Naive thymus-derived CD4-positive, alpha-beta T cell (primary cell): ENCODE measurements at regions of chr13 and their contacts with region 1.

Region 1: DNA sequence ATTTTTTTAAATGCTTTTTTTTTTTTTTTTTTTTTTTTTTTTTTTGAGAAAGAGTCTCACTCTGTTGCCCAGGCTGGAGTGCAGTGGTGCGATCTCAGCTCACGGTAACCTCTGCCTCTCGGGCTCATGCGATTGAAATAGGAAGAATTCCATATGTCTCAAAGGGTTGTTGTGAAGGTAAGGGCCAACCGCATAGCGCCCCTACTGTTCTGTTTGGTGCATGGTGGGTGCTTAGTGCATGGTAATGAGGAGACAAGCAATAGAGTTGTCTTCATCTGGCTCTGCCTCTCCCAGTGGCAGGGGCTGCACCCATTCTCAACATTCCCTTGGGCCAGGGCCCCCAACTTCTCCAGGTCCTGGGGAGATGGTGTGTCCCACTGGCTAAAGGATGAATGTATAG is 68.7 kb downstream of the RASL11A start:
- DNase-seq: peak in 7 of 9 donors; percentile 28 to 61 (median 51)
- ATAC-seq: peak; percentile 78
- H3K4me3 ChIP-seq: no peak overlapping the region
- H3K4me3 Mint-ChIP-seq: peak overlapping the region in 2 of 10 donors; percentile 29
- H3K27ac ChIP-seq: no peak overlapping the region
- H3K27ac Mint-ChIP-seq: no peak overlapping the region
- H3K4me1 ChIP-seq: no peaks in the 10 kb centered on the region
- H3K4me1 Mint-ChIP-seq: peaks cover 0 to 5% (median 0%) of the 10 kb centered on the region in 7 donors
- H3K27me3 ChIP-seq: no peaks in the 10 kb centered on the region
- H3K27me3 Mint-ChIP-seq: peaks cover 0 to 17% (median 4%) of the 10 kb centered on the region in 5 donors

Region 2: DNA sequence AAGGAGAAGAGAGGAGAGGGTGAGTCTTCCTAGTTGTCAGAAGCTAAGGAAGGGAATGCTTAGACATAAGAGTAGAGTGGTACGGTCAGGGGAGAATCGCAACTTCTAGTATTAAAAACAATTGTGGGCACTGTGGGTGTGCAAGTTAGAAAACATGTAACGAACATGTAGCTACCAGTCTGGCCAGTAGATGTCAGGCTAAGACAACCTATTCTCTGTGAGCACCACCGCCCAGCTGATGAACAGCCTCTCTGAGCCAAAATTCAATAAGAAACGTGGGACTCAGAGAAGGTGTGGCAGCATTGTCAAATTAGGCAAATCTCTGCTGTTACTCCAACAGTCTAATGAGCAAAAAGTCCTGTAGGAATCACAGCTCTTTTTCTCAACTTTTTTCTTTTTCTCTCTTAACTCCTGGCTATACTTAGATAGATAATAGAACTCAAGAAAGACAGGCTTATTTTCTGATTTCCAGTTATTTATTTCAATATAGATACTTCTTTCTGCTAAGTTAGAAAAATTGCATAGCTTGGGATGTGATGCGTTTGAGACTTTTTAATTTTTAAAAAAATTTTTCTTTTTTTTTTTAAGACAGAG is 353.9 kb before region 1 on chr13:
- CTCF ChIA-PET with region 1: interaction called, 4 read pairs
- POLR2A ChIA-PET with region 1: no interaction called
- intact Hi-C with region 1: loop called in 1 of 2 experiments (anchors 1 kb)
- DNase-seq: peak; percentile 17 to 76 (median 65)
- ATAC-seq: peak; percentile 83
- H3K4me3 ChIP-seq: no peak overlapping the region
- H3K4me3 Mint-ChIP-seq: no peak overlapping the region
- H3K27ac ChIP-seq: no peak overlapping the region
- H3K27ac Mint-ChIP-seq: peak overlapping the region in 1 of 9 donors; percentile 46
- H3K4me1 ChIP-seq: no peaks in the 10 kb centered on the region
- H3K4me1 Mint-ChIP-seq: peaks cover 0 to 10% (median 0%) of the 10 kb centered on the region in 7 donors
- H3K27me3 ChIP-seq: no peaks in the 10 kb centered on the region
- H3K27me3 Mint-ChIP-seq: peaks cover 3 to 17% (median 11%) of the 10 kb centered on the region in 5 donors

Region 3: GRCh38 chr13:27097691-27098090 is 241.6 kb before region 1 on chr13:
- CTCF ChIA-PET with region 1: no interaction called
- POLR2A ChIA-PET with region 1: no interaction called
- intact Hi-C with region 1: loop called in 1 of 2 experiments (anchors 10 kb)
- DNase-seq: no peak
- ATAC-seq: no peak
- H3K4me3 ChIP-seq: no peak overlapping the region
- H3K4me3 Mint-ChIP-seq: no peak overlapping the region
- H3K27ac ChIP-seq: no peak overlapping the region
- H3K27ac Mint-ChIP-seq: no peak overlapping the region
- H3K4me1 ChIP-seq: no peaks in the 10 kb centered on the region
- H3K4me1 Mint-ChIP-seq: peaks cover 9 to 21% (median 17%) of the 10 kb centered on the region in 7 donors
- H3K27me3 ChIP-seq: no peaks in the 10 kb centered on the region
- H3K27me3 Mint-ChIP-seq: no peaks in the 10 kb centered on the region

Region 4: GRCh38 chr13:27293873-27294515 is 45.3 kb before region 1 on chr13:
- CTCF ChIA-PET with region 1: interaction called, 3 read pairs
- POLR2A ChIA-PET with region 1: interaction called, 5 read pairs
- intact Hi-C with region 1: loop called in 1 of 2 experiments (anchors 5 kb)
- DNase-seq: peak in 7 of 9 donors; percentile 35 to 63 (median 57)
- ATAC-seq: peak; percentile 75
- H3K4me3 ChIP-seq: no peak overlapping the region
- H3K4me3 Mint-ChIP-seq: peak overlapping the region; percentile 16 to 84 (median 64)
- H3K27ac ChIP-seq: peak overlapping the region; percentile 61
- H3K27ac Mint-ChIP-seq: peak overlapping the region; percentile 31 to 96 (median 91)
- H3K4me1 ChIP-seq: peaks cover 0 to 33% of the 10 kb centered on the region in 2 donors
- H3K4me1 Mint-ChIP-seq: peaks cover 17 to 64% (median 38%) of the 10 kb centered on the region in 7 donors
- H3K27me3 ChIP-seq: no peaks in the 10 kb centered on the region
- H3K27me3 Mint-ChIP-seq: no peaks in the 10 kb centered on the region

Region 5: GRCh38 chr13:27362064-27362883 is 23.0 kb after region 1 on chr13:
- CTCF ChIA-PET with region 1: no interaction called
- POLR2A ChIA-PET with region 1: no interaction called
- intact Hi-C with region 1: no loop called
- DNase-seq: peak; percentile 51 to 82 (median 66)
- ATAC-seq: peak; percentile 95
- H3K4me3 ChIP-seq: peak overlapping the region; percentile 47
- H3K4me3 Mint-ChIP-seq: peak overlapping the region; percentile 24 to 83 (median 45)
- H3K27ac ChIP-seq: no peak overlapping the region
- H3K27ac Mint-ChIP-seq: peak overlapping the region in 1 of 9 donors; percentile 35
- H3K4me1 ChIP-seq: peaks cover 0 to 4% of the 10 kb centered on the region in 2 donors
- H3K4me1 Mint-ChIP-seq: peaks cover 0 to 9% (median 5%) of the 10 kb centered on the region in 7 donors
- H3K27me3 ChIP-seq: peaks cover 0 to 7% of the 10 kb centered on the region in 2 donors
- H3K27me3 Mint-ChIP-seq: peaks cover 13 to 50% (median 25%) of the 10 kb centered on the region in 5 donors